PC-9 (cell line): ENCODE measurements at regions of chr7 and their contacts with region 1.

Region 1: GRCh38 chr7:13990984-13991790 is 1.7 kb upstream of the ETV1 start:
- DNase-seq: peak; percentile 94 to 98
- H3K4me3 ChIP-seq: peak overlapping the region; percentile 59
- H3K27ac ChIP-seq: peak overlapping the region; percentile 60
- H3K4me1 ChIP-seq: peaks cover 20% of the 10 kb centered on the region
- H3K27me3 ChIP-seq: no peaks in the 10 kb centered on the region
- CTCF ChIP-seq: peak; percentile 48

Region 2: GRCh38 chr7:13496976-13497375 is 494.2 kb before region 1 on chr7:
- CTCF ChIA-PET with region 1: no interaction called
- POLR2A ChIA-PET with region 1: no interaction called
- intact Hi-C with region 1: no loop called
- DNase-seq: no peak
- H3K4me3 ChIP-seq: no peak overlapping the region
- H3K27ac ChIP-seq: no peak overlapping the region
- H3K4me1 ChIP-seq: no peaks in the 10 kb centered on the region
- H3K27me3 ChIP-seq: no peaks in the 10 kb centered on the region
- CTCF ChIP-seq: no peak

Region 3: GRCh38 chr7:13742811-13743210 is 248.4 kb before region 1 on chr7:
- CTCF ChIA-PET with region 1: interaction called, 8 read pairs
- POLR2A ChIA-PET with region 1: no interaction called
- intact Hi-C with region 1: loop called (anchors 2 kb)
- DNase-seq: peak in 1 of 2 experiments; percentile 23
- H3K4me3 ChIP-seq: no peak overlapping the region
- H3K27ac ChIP-seq: no peak overlapping the region
- H3K4me1 ChIP-seq: no peaks in the 10 kb centered on the region
- H3K27me3 ChIP-seq: no peaks in the 10 kb centered on the region
- CTCF ChIP-seq: peak; percentile 64; the same call in 1 of the 2 replicates

Region 4: GRCh38 chr7:13879994-13880686 is 111.0 kb before region 1 on chr7:
- CTCF ChIA-PET with region 1: no interaction called
- POLR2A ChIA-PET with region 1: no interaction called
- intact Hi-C with region 1: loop called (anchors 1 kb)
- DNase-seq: peak; percentile 44 to 49
- H3K4me3 ChIP-seq: no peak overlapping the region
- H3K27ac ChIP-seq: no peak overlapping the region
- H3K4me1 ChIP-seq: 0 out of 2 replicates have a peak, but pooled peaks cover 4% of the 10 kb centered on the region
- H3K27me3 ChIP-seq: no peaks in the 10 kb centered on the region
- CTCF ChIP-seq: no peak

Region 5: DNA sequence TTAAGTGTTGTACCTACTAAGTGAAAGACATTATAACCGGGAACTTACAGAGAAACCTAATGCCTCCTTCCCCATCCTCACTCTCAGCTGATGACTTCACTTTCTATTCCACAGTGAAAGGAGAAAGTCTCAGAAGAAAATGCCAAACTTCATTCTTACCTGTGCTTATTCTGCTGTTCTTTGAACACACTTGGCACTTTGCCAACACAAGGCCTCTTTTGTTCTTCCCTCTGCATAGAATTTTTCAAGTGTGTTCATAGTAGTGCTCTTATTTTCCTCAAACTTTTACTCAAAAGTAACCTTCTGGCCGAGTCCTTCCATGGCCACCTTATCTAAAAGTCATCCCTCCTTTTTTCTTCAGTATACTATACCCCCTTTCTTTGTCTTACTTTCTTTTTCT is 57.7 kb after region 1 on chr7:
- CTCF ChIA-PET with region 1: no interaction called
- POLR2A ChIA-PET with region 1: no interaction called
- intact Hi-C with region 1: no loop called
- DNase-seq: no peak
- H3K4me3 ChIP-seq: no peak overlapping the region
- H3K27ac ChIP-seq: no peak overlapping the region
- H3K4me1 ChIP-seq: no peaks in the 10 kb centered on the region
- H3K27me3 ChIP-seq: no peaks in the 10 kb centered on the region
- CTCF ChIP-seq: no peak

Region 6: GRCh38 chr7:14457568-14458453 is 466.6 kb after region 1 on chr7:
- CTCF ChIA-PET with region 1: no interaction called
- POLR2A ChIA-PET with region 1: no interaction called
- intact Hi-C with region 1: loop called (anchors 2 kb)
- DNase-seq: peak; percentile 66 to 68
- H3K4me3 ChIP-seq: peak overlapping the region; percentile 6; the same call in 1 of the 2 replicates
- H3K27ac ChIP-seq: no peak overlapping the region
- H3K4me1 ChIP-seq: no peaks in the 10 kb centered on the region
- H3K27me3 ChIP-seq: no peaks in the 10 kb centered on the region
- CTCF ChIP-seq: peak; percentile 98